Mammary epithelial cell (primary cell): ENCODE measurements at regions of chr11 and their contacts with region 1.

Region 1: GRCh38 chr11:32931606-32932005 is 39.0 kb downstream of the QSER1 start:
- DNase-seq: no peak
- H3K4me3 ChIP-seq: no peak overlapping the region
- H3K27ac ChIP-seq: no peak overlapping the region
- H3K4me1 ChIP-seq: no peaks in the 10 kb centered on the region
- H3K27me3 ChIP-seq: no peaks in the 10 kb centered on the region
- CTCF ChIP-seq: no peak

Region 2: DNA sequence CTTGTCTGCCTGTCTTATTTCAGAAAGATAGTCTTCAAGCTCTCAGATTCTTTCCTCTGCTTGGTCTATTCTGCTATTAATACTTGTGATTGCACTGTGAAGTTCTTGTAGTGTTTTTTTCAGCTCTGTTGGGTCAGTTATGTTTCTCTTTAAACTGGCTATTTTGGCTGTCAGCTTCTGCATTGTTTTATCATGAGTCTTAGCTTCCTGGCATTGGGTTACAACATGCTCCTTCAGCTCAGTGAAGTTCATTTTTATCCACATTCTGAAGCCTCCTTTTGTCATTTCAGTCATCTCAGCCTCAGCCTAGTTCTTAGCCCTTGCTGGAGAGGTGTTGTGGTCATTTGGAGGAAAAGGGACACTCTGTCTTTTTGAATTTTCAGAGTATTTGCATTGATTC is 68.6 kb after region 1 on chr11:
- CTCF ChIA-PET with region 1: no interaction called
- dilution Hi-C with region 1: loop called (anchors 5 kb)
- in situ Hi-C with region 1: no loop called
- intact Hi-C with region 1: no loop called
- DNase-seq: peak; percentile 30
- H3K4me3 ChIP-seq: no peak overlapping the region
- H3K27ac ChIP-seq: no peak overlapping the region
- H3K4me1 ChIP-seq: peaks cover 15% of the 10 kb centered on the region
- H3K27me3 ChIP-seq: no peaks in the 10 kb centered on the region
- CTCF ChIP-seq: no peak

Region 3: GRCh38 chr11:33116535-33116934 is 184.9 kb after region 1 on chr11:
- CTCF ChIA-PET with region 1: no interaction called
- dilution Hi-C with region 1: no loop called
- in situ Hi-C with region 1: no loop called
- intact Hi-C with region 1: no loop called
- DNase-seq: peak; percentile 84
- H3K4me3 ChIP-seq: no peak overlapping the region
- H3K27ac ChIP-seq: no peak overlapping the region
- H3K4me1 ChIP-seq: peaks cover 8% of the 10 kb centered on the region
- H3K27me3 ChIP-seq: no peaks in the 10 kb centered on the region
- CTCF ChIP-seq: no peak